ENCODE measurements at regions of chrX and their contacts with region 1.

Region 1: DNA sequence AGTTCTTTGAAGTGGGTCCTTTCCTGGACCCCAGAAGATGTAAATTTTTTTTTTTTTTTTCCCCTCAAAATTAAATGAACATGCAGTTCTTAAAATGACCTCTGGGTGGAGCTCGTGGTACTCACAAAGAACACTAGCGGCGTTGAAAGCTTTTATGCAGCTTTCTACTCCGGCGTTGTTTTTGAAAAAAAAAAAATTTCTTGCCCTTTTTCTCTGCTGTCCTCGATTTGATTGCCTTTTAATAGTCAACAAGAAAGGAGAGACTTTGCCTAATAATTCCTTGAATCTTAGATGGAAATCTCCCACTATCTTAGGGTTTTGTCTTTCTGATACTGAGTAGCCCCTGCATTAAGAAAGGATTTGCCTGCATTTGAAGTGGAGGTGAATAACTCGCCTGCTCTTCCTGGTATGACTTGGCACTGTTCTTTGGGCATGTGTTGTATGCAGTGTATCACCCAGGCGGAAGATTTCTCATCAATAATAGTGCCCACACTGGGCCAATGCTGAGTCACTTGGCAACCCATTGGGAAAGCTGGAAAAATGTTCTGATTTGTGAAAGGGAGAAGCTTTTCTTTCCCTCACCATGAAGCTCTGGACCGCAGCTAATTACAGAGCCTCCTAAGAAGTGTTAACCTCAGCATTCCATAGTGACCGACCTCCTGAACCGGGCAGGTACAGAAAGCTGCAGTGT is 104.0 kb downstream of the PHEX start:
- DNase-seq: no peak
- H3K4me3 ChIP-seq: no peak overlapping the region
- H3K4me3 Mint-ChIP-seq: no peak overlapping the region
- H3K27ac Mint-ChIP-seq: peak overlapping the region; percentile 77
- H3K4me1 ChIP-seq: peaks cover 18% of the 10 kb centered on the region
- H3K4me1 Mint-ChIP-seq: peaks cover 6% of the 10 kb centered on the region
- H3K27me3 ChIP-seq: no peaks in the 10 kb centered on the region
- H3K27me3 Mint-ChIP-seq: no peaks in the 10 kb centered on the region
- CTCF ChIP-seq: peak; percentile 49 to 52

Region 2: DNA sequence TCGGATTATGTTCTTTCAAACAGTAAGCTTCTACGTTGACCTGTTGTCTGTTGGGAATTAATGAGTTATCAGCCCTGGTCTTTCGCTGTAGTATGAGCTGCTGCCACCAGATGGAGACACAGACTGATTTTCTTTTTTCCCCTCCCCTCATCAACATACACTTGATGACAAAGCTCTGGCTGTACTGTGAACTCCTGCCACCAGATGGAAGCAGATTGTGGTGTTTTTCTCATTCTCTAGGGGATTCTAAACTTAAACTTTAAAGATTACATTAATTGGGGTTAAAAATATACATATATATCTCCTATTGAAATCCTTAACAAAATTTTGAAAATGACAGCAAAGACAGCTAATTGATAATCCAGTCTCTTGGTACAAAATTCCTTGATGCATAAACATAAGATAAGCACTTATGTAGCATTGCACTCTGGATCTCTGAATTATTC is 150.8 kb before region 1 on chrX:
- CTCF ChIA-PET with region 1: interaction called, 24 read pairs
- POLR2A ChIA-PET with region 1: no interaction called
- intact Hi-C with region 1: loop called (anchors 1 kb)
- DNase-seq: peak; percentile 62 to 64
- H3K4me3 ChIP-seq: no peak overlapping the region
- H3K4me3 Mint-ChIP-seq: no peak overlapping the region
- H3K27ac Mint-ChIP-seq: no peak overlapping the region
- H3K4me1 ChIP-seq: 0 out of 2 replicates have a peak, but pooled peaks cover 6% of the 10 kb centered on the region
- H3K4me1 Mint-ChIP-seq: no peaks in the 10 kb centered on the region
- H3K27me3 ChIP-seq: no peaks in the 10 kb centered on the region
- H3K27me3 Mint-ChIP-seq: no peaks in the 10 kb centered on the region
- CTCF ChIP-seq: peak; percentile 64 to 77

Region 3: DNA sequence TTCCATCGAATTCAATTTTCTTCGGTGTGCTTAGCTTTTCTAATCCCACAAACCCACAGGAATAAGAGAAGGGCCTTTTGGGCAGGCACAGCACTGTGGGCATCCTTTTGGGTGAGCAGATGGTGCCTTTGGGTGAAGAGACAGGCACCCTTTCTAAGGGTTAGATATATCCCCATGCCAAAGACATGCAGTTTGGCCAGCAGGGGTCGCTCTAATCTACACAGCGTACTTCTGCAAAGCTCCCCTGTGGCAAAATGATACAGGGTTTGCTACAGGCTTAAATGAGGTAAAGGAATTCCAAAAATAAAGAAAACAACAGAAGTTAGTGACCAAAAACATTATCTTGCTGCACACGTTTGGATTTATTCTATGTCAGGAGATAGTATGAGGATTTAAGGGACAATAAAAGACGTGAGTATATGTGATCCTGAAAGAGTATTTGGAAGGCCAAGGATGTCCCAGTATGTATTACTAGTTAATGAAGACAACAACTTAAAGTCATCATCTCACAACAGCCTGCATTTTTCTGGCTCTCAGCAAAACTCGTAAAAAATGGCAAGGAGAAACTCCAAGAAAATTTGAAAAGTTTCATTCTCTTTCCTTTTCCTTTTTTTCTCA is 54.6 kb before region 1 on chrX:
- CTCF ChIA-PET with region 1: interaction called, 13 read pairs
- POLR2A ChIA-PET with region 1: no interaction called
- intact Hi-C with region 1: loop called (anchors 1 kb)
- DNase-seq: peak; percentile 41 to 51
- H3K4me3 ChIP-seq: no peak overlapping the region
- H3K4me3 Mint-ChIP-seq: no peak overlapping the region
- H3K27ac Mint-ChIP-seq: no peak overlapping the region
- H3K4me1 ChIP-seq: no peaks in the 10 kb centered on the region
- H3K4me1 Mint-ChIP-seq: peaks cover 7% of the 10 kb centered on the region
- H3K27me3 ChIP-seq: no peaks in the 10 kb centered on the region
- H3K27me3 Mint-ChIP-seq: no peaks in the 10 kb centered on the region
- CTCF ChIP-seq: peak; percentile 42 to 63

Region 4: DNA sequence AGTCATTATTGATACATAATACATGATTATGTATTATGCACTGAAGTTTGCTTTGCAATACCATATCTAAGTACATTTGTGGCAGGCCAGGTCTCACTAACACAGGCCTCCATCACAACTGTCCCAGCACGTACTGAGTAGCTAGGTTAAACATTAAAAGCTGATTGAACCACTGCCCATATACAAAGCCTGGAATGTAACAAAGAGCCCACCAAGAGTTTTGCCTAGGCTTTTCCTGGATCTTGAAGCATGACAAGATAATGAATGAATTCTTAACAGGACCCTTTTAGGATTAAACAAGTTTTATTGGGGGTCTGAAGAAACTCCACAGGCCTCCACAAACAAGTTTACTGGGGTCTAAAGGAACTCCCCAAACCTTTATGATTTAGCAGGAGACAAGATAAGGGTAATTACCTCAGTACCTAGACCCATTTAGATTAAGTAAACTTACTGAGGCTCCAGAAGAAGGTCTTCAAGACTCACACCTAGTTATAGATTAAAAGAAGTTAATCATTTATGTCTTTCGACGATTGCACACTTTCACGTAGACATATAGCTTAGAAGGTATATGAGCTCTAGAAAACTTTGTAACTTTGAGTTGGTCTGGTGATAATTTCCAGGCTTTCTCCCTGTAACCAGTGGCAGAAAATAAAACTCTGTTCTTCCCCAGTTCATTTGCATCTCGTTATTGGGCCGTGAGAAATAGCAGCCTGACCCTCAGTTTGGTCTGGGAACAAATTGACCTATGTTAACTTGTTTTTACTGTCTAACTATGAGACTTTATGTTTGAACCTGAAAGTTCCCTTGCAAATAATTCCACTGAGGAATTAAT is 19.3 kb before region 1 on chrX:
- CTCF ChIA-PET with region 1: interaction called, 10 read pairs
- POLR2A ChIA-PET with region 1: no interaction called
- intact Hi-C with region 1: loop called (anchors 1 kb)
- DNase-seq: peak in 1 of 2 experiments; percentile 23
- H3K4me3 ChIP-seq: no peak overlapping the region
- H3K4me3 Mint-ChIP-seq: peak overlapping the region; percentile 27
- H3K27ac Mint-ChIP-seq: peak overlapping the region; percentile 61
- H3K4me1 ChIP-seq: peaks cover 39% of the 10 kb centered on the region
- H3K4me1 Mint-ChIP-seq: peaks cover 7% of the 10 kb centered on the region
- H3K27me3 ChIP-seq: no peaks in the 10 kb centered on the region
- H3K27me3 Mint-ChIP-seq: no peaks in the 10 kb centered on the region
- CTCF ChIP-seq: no peak

Region 5: DNA sequence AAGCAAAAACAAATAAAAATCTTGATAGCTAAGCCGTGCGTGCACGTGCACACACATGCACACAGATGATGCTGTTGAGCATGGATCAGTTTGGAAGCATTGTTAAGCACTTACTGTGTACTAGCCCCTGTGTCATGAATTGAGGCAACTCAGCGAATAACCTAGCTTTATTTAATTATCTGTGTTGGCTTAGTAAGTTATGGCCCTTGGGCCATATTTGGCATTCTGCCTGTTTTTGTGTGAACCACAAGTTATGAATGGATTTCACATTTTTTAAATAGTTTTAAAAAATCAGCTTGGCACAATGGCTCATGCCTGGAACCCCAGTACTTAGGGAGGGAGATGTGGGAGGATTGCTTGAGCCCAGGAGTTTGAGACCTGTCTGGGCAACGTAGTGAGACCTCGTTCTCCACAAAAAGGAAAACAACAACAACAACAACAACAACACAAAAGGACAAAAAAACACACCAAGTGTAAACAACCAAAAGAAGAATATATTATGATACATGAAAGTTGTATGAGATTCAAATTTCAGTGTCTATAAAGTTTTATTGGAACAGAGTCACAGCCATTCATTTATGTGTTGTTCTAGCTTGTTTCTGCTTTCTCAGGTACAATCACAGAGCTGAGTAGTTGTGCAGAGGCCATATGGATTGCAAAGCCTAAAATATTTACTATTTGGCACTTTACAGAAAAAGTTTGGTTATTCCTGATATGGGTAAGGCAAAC is 23.1 kb after region 1 on chrX:
- CTCF ChIA-PET with region 1: no interaction called
- POLR2A ChIA-PET with region 1: no interaction called
- intact Hi-C with region 1: no loop called
- DNase-seq: no peak
- H3K4me3 ChIP-seq: no peak overlapping the region
- H3K4me3 Mint-ChIP-seq: no peak overlapping the region
- H3K27ac Mint-ChIP-seq: no peak overlapping the region
- H3K4me1 ChIP-seq: no peaks in the 10 kb centered on the region
- H3K4me1 Mint-ChIP-seq: no peaks in the 10 kb centered on the region
- H3K27me3 ChIP-seq: no peaks in the 10 kb centered on the region
- H3K27me3 Mint-ChIP-seq: no peaks in the 10 kb centered on the region
- CTCF ChIP-seq: no peak

Region 6: GRCh38 chrX:22192417-22193060 is 56.4 kb after region 1 on chrX:
- CTCF ChIA-PET with region 1: interaction called, 5 read pairs
- POLR2A ChIA-PET with region 1: no interaction called
- intact Hi-C with region 1: loop called (anchors 1 kb)
- DNase-seq: peak; percentile 59 to 65
- H3K4me3 ChIP-seq: no peak overlapping the region
- H3K4me3 Mint-ChIP-seq: peak overlapping the region; percentile 53
- H3K27ac Mint-ChIP-seq: no peak overlapping the region
- H3K4me1 ChIP-seq: no peaks in the 10 kb centered on the region; the same call in 1 of the 2 replicates
- H3K4me1 Mint-ChIP-seq: peaks cover 7% of the 10 kb centered on the region
- H3K27me3 ChIP-seq: no peaks in the 10 kb centered on the region
- H3K27me3 Mint-ChIP-seq: no peaks in the 10 kb centered on the region
- CTCF ChIP-seq: peak; percentile 45 to 73

Region 7: GRCh38 chrX:22278374-22278773 is 142.2 kb after region 1 on chrX:
- CTCF ChIA-PET with region 1: interaction called, 5 read pairs
- POLR2A ChIA-PET with region 1: no interaction called
- intact Hi-C with region 1: loop called (anchors 1 kb)
- DNase-seq: peak in 1 of 2 experiments; percentile 5
- H3K4me3 ChIP-seq: no peak overlapping the region
- H3K4me3 Mint-ChIP-seq: no peak overlapping the region
- H3K27ac Mint-ChIP-seq: no peak overlapping the region
- H3K4me1 ChIP-seq: no peaks in the 10 kb centered on the region
- H3K4me1 Mint-ChIP-seq: no peaks in the 10 kb centered on the region
- H3K27me3 ChIP-seq: no peaks in the 10 kb centered on the region
- H3K27me3 Mint-ChIP-seq: peaks cover 9% of the 10 kb centered on the region
- CTCF ChIP-seq: peak; percentile 10 to 54

Region 8: GRCh38 chrX:22748093-22748999 is 612.2 kb after region 1 on chrX:
- CTCF ChIA-PET with region 1: interaction called, 10 read pairs
- POLR2A ChIA-PET with region 1: no interaction called
- intact Hi-C with region 1: loop called (anchors 1 kb)
- DNase-seq: peak in 1 of 2 experiments; percentile 54
- H3K4me3 ChIP-seq: no peak overlapping the region
- H3K4me3 Mint-ChIP-seq: no peak overlapping the region
- H3K27ac Mint-ChIP-seq: no peak overlapping the region
- H3K4me1 ChIP-seq: no peaks in the 10 kb centered on the region
- H3K4me1 Mint-ChIP-seq: no peaks in the 10 kb centered on the region
- H3K27me3 ChIP-seq: no peaks in the 10 kb centered on the region
- H3K27me3 Mint-ChIP-seq: peaks cover 6% of the 10 kb centered on the region
- CTCF ChIP-seq: peak; percentile 53 to 74